Endothelial cell of umbilical vein (primary cell): ENCODE measurements at regions of chr6 and their contacts with region 1.

Region 1: DNA sequence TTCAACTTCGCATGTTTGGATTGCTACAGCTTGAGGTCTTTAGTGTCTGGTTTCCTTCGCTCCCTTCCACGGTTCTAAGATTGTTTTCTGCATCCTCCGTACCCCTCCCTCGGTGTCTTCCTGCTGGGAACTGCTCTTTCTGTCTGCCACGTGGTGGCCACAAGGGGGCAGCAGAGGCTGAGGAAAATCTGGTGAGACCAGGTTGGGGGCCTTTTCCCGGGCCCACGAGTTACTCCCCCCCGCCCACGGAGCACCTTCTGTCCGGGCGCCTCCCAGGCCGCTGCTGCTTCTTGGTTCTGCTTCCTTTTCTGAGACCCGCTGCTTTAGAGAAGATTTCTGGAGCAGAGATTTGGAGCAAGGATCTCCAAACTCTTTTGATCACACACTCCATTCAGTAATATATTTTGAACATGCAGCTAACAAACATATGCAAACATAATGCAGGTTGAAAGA is 21.1 kb upstream of the NOTCH4 start:
- DNase-seq: peak; percentile 85
- H3K4me3 ChIP-seq: no peak overlapping the region
- H3K27ac ChIP-seq: no peak overlapping the region
- H3K4me1 ChIP-seq: peaks cover 3% of the 10 kb centered on the region
- H3K27me3 ChIP-seq: no peaks in the 10 kb centered on the region
- CTCF ChIP-seq: peak; percentile 72 to 89
- POLR2A ChIP-seq: no peak

Region 2: DNA sequence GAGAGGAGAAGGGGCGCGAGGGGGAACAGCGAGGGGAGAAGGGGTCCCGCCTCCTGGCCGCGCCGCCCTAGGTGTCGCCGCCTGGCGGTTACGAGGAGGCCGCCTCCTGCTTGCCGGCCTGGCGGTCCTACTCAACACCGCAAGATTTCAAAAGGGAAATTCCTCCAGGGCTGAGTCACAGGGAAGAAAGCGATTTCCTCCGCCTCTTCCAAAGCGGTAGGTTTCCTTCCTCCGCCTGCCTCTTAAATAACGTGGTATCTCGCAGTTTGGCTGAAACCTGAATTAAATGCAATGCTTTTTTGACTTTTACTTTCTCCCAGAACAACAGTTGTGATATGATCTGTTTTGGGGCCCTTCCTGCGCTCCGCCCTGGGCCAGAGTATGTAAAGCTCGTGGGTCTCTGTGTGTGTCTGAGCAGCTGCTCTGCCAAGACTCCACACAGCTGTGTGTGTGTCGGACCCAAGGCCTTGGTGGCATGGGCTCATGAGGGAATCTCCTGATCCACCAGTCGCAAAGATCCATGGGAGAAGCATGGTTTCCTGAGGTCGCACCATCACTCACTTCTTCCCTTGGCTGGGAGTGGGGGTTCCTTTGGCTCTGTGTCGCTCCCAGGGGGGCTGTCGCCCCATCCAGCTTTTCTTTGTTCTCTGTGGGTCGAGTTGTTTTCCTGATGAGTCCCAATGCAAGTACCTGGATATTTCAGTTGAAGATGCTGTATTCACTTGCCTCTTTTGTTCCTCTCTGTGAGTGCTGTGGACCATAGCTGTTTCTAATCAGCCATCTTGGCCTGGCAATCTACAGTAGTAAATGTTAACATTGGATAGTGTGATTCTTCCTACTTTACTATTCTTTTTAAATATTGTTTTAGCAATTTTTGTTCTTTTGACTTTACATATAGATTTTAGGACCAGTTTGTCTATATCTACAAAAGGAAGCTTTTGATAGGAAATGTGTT is 10.5 kb after region 1 on chr6:
- CTCF ChIA-PET with region 1: interaction called, 30 read pairs
- POLR2A ChIA-PET with region 1: interaction called, 6 read pairs
- dilution Hi-C with region 1: no loop called
- intact Hi-C with region 1: loop called (anchors 1 kb)
- DNase-seq: peak; percentile 91
- H3K4me3 ChIP-seq: peak overlapping the region in 1 of 3 experiments; percentile 19
- H3K27ac ChIP-seq: peak overlapping the region; percentile 79
- H3K4me1 ChIP-seq: peaks cover 27% of the 10 kb centered on the region
- H3K27me3 ChIP-seq: no peaks in the 10 kb centered on the region
- CTCF ChIP-seq: peak; percentile 33 to 86
- POLR2A ChIP-seq: peak; percentile 72

Region 3: DNA sequence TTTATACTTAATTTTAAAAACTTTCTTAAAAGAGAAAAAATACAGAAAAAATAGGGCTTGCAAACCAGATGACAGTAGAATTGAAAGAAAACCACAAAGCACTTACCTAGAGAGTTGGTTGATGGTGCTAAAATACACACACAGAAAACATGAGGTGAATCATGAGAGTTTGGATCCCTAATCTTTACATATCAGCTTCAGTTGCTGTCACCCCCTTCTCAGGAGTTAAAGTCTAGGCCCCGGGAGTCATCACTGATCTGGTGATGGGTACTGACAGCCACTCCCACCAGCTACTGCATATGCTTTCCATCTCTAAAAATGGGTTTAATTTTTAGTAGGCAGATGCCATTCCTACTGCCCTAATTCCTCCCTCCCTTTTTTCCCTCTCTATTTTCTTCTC is 110.0 kb after region 1 on chr6:
- CTCF ChIA-PET with region 1: no interaction called
- POLR2A ChIA-PET with region 1: no interaction called
- dilution Hi-C with region 1: no loop called
- intact Hi-C with region 1: no loop called
- DNase-seq: no peak
- H3K4me3 ChIP-seq: no peak overlapping the region
- H3K27ac ChIP-seq: no peak overlapping the region
- H3K4me1 ChIP-seq: peaks cover 7% of the 10 kb centered on the region
- H3K27me3 ChIP-seq: no peaks in the 10 kb centered on the region
- CTCF ChIP-seq: no peak
- POLR2A ChIP-seq: no peak

Region 4: DNA sequence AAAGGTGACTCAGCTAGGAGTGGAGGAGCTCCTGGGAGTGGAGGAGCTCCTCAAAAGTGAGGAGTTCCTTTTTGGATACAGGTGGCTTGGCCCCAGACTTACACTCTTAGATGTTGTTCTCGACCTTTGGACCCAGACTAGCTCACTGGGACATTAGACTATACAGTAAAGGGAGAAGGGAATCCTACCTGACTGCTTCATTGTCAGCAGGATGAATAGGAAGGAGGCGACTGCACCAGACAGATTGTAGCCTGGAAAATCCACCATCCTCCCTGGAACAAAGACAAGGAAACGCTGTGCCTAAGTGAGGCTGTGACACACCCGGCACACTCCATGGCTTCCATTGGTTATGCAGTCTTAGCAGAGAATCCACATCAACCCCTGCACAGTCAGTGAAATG is 161.9 kb after region 1 on chr6 and contains the start of gene BTNL2:
- CTCF ChIA-PET with region 1: interaction called, 10 read pairs
- POLR2A ChIA-PET with region 1: no interaction called
- dilution Hi-C with region 1: loop called (anchors 25 kb)
- intact Hi-C with region 1: no loop called
- DNase-seq: no peak
- H3K4me3 ChIP-seq: no peak within 1 kb of the TSS
- H3K27ac ChIP-seq: no peak within 1 kb of the TSS
- H3K4me1 ChIP-seq: no peaks in the 10 kb centered on the region
- H3K27me3 ChIP-seq: peaks cover 44 to 59% of the 10 kb centered on the region in 2 experiments
- CTCF ChIP-seq: no peak
- POLR2A ChIP-seq: no peak
- total RNA-seq, gene BTNL2: not detected in 2 replicates

Region 5: DNA sequence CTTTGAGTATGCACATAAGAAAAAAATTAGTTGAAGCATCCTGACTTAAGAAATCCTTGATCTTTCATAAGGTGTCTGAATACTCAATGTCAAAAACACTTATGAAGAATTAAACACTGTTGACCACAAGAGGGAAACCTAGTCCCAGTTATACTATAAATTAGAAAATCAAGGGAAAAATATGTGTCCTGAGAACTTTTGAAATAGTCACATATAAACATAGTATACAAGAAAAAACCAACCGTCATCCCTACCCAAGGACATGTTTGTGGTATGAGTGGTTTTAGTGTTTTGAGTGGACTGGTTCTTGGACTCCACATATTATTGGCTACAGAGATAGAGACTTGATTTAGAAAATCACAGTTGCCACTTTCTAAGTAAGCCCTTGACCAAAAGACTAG is 187.1 kb after region 1 on chr6:
- CTCF ChIA-PET with region 1: interaction called, 10 read pairs
- POLR2A ChIA-PET with region 1: no interaction called
- dilution Hi-C with region 1: no loop called
- intact Hi-C with region 1: no loop called
- DNase-seq: peak; percentile 51
- H3K4me3 ChIP-seq: no peak overlapping the region
- H3K27ac ChIP-seq: no peak overlapping the region
- H3K4me1 ChIP-seq: no peaks in the 10 kb centered on the region
- H3K27me3 ChIP-seq: peaks cover 20 to 27% of the 10 kb centered on the region in 2 experiments
- CTCF ChIP-seq: peak in 1 of 2 donors; percentile 12
- POLR2A ChIP-seq: no peak

Region 6: GRCh38 chr6:32785781-32786533 is 541.0 kb after region 1 on chr6:
- CTCF ChIA-PET with region 1: interaction called, 15 read pairs
- POLR2A ChIA-PET with region 1: no interaction called
- dilution Hi-C with region 1: no loop called
- intact Hi-C with region 1: no loop called
- DNase-seq: peak; percentile 58
- H3K4me3 ChIP-seq: no peak overlapping the region
- H3K27ac ChIP-seq: no peak overlapping the region
- H3K4me1 ChIP-seq: no peaks in the 10 kb centered on the region
- H3K27me3 ChIP-seq: peaks cover 8 to 50% of the 10 kb centered on the region in 2 experiments
- CTCF ChIP-seq: peak; percentile 49 to 51
- POLR2A ChIP-seq: no peak